Ascending aorta (tissue), 2 donors: ENCODE measurements at regions of chr18 and their contacts with region 1.

Region 1: GRCh38 chr18:35005963-35006577 is 35.1 kb upstream of the MAPRE2 start:
- DNase-seq: no peak
- H3K4me3 ChIP-seq: no peak overlapping the region
- H3K27ac ChIP-seq: no peak overlapping the region
- H3K4me1 ChIP-seq: peaks cover 0 to 4% of the 10 kb centered on the region in 2 donors
- H3K27me3 ChIP-seq: no peaks in the 10 kb centered on the region
- CTCF ChIP-seq: peak; percentile 53 to 77 (median 57)

Region 2: DNA sequence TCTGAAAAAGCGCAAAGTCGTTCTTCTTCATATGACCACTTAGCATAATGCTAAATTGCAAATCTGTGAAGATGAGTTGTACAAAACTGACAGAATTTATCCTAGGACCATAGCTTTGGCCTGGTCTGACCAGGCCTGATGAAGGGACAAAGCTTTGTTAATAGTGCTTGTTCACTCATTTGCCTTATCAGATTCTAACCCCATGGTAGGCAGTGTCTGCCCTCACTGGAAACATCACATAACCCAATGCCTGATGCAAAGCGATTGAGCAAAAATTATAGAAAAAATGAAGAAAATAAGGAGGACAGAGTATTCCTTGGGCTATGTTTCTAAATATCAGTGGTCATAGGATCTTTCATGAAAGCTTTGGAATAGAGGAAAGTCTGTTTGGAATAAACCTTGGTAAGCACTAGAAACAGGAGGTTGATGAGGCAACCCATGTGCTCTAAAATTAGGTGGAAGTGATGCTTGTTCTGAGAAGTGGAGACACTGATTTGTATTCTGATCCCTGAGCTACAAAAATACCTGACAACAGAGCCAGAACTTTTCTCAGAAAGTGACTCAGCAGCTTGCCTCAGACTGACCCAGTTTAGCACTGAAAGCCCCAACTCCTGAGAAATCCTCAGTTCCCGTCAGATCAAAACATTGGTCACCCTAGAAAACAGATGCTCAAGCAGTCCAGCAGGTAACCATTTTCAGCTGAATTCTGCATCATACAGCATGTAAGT is 96.3 kb before region 1 on chr18:
- intact Hi-C with region 1: no loop called
- DNase-seq: peak in 1 of 2 donors; percentile 74
- H3K4me3 ChIP-seq: no peak overlapping the region
- H3K27ac ChIP-seq: peak overlapping the region; percentile 62 to 67
- H3K4me1 ChIP-seq: peaks cover 0 to 9% of the 10 kb centered on the region in 2 donors
- H3K27me3 ChIP-seq: no peaks in the 10 kb centered on the region
- CTCF ChIP-seq: no peak

Region 3: DNA sequence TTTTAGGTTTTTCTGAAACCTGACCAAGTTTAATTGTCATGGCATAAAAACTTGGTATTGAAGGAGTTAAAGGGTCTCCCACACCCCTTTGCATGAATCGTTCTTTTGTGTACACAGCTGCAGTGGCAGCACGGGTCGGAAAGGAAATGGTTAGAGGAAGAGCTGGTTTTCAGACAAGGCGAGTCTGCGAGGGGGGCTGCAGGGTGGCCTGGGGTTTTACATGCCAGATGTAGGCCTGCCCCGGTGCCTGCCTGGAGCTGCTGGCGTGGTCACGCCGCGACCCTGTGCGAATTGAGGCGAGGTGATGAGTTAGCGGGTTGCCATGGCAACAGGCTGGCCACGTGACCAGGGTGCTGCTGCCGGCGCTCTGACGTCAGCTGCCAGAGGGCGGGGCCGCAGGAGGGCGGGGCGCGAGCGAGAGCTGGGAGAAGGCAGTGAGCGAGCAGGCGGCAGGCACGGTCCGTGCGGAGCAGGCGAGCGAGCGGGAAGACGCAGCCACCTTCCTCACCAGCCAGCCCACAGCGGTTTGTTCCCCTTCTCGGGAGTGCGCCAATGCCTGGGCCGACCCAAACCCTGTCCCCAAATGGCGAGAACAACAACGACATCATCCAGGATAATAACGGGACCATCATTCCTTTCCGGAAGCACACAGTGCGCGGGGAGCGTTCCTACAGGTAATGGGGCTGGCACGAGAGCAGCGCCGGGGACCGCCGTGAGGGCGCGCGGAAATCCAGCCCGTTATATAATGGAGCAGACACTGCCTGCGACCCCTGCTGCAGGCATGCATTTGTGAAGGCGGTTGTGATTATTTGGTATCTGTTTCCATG is 35.1 kb after region 1 on chr18 and contains the start of gene MAPRE2:
- intact Hi-C with region 1: loop called (anchors 5 kb)
- DNase-seq: peak; percentile 97 to 100
- H3K4me3 ChIP-seq: peak within 1 kb of the TSS; percentile 79 to 82
- H3K27ac ChIP-seq: peak within 1 kb of the TSS; percentile 76 to 82
- H3K4me1 ChIP-seq: peaks cover 0 to 27% of the 10 kb centered on the region in 2 donors
- H3K27me3 ChIP-seq: no peaks in the 10 kb centered on the region
- CTCF ChIP-seq: no peak
- total RNA-seq, gene MAPRE2: 22.4 TPM

Region 4: GRCh38 chr18:35143622-35144596 is 137.8 kb after region 1 on chr18:
- intact Hi-C with region 1: loop called (anchors 1 kb)
- DNase-seq: no peak
- H3K4me3 ChIP-seq: no peak overlapping the region
- H3K27ac ChIP-seq: no peak overlapping the region
- H3K4me1 ChIP-seq: no peaks in the 10 kb centered on the region
- H3K27me3 ChIP-seq: no peaks in the 10 kb centered on the region
- CTCF ChIP-seq: peak; percentile 65 to 82 (median 74)